B cell (primary cell): ENCODE measurements at regions of chr1 and their contacts with region 1.

Region 1: DNA sequence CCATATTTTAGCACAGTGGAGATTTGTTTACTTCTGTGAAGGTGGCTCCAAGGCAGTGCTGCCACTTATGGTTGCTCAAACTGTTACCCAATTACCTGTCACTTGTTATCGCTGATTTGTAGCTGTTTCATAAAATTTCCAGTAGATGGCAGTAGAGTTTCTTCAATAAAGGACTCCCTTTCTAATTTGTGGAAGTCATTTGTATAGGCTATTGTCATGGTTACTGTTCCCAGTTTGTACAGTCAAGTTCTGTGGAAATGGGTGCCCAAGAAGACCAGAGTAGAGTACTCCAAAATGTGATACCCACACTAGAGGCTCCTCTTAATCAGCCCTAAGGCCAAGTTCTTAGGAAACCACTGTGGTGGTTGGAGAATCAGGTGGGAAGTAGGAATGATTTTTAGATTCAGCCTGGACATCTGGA is 186.1 kb downstream of the CLEC20A start:
- DNase-seq: peak; percentile 70
- ATAC-seq: peak; percentile 45
- H3K4me3 ChIP-seq: no peak overlapping the region
- H3K4me3 Mint-ChIP-seq: no peak overlapping the region
- H3K27ac ChIP-seq: no peak overlapping the region
- H3K27ac Mint-ChIP-seq: no peak overlapping the region
- H3K4me1 ChIP-seq: no peaks in the 10 kb centered on the region
- H3K4me1 Mint-ChIP-seq: no peaks in the 10 kb centered on the region
- H3K27me3 ChIP-seq: peaks cover 0 to 3% (median 0%) of the 10 kb centered on the region in 4 experiments
- H3K27me3 Mint-ChIP-seq: peaks cover 10% of the 10 kb centered on the region
- CTCF ChIP-seq: peak; percentile 82

Region 2: GRCh38 chr1:178501705-178502329 is 191.1 kb after region 1 on chr1:
- CTCF ChIA-PET with region 1: interaction called, 120 read pairs
- POLR2A ChIA-PET with region 1: no interaction called
- intact Hi-C with region 1: loop called (anchors 1 kb)
- DNase-seq: peak; percentile 69
- ATAC-seq: peak; percentile 69
- H3K4me3 ChIP-seq: no peak overlapping the region
- H3K4me3 Mint-ChIP-seq: no peak overlapping the region
- H3K27ac ChIP-seq: no peak overlapping the region
- H3K27ac Mint-ChIP-seq: no peak overlapping the region
- H3K4me1 ChIP-seq: no peaks in the 10 kb centered on the region
- H3K4me1 Mint-ChIP-seq: no peaks in the 10 kb centered on the region
- H3K27me3 ChIP-seq: peaks cover 0 to 7% (median 3%) of the 10 kb centered on the region in 4 experiments
- H3K27me3 Mint-ChIP-seq: peaks cover 8% of the 10 kb centered on the region
- CTCF ChIP-seq: peak; percentile 77

Region 3: DNA sequence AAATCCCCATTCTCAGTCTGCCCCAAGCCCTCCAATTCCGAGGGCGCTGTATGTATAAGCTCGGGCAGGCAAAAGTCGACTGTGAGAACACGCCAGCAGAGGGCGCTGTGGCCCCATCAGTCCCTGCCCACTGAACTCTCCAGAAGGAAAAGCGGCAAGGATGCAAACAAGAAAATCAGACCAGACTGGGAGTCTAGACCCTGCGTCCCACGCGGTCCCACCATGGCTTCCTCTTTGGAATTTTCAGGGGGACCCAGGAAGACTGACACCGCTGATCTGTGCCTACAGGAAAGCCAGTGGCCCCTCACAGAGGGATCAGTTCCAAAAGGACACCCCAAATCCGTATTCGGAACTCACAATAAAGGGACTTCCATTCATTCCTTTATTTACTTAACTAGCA is 221.7 kb after region 1 on chr1:
- CTCF ChIA-PET with region 1: interaction called, 54 read pairs
- POLR2A ChIA-PET with region 1: no interaction called
- intact Hi-C with region 1: loop called (anchors 1 kb)
- DNase-seq: peak; percentile 87
- ATAC-seq: peak; percentile 90
- H3K4me3 ChIP-seq: no peak overlapping the region
- H3K4me3 Mint-ChIP-seq: no peak overlapping the region
- H3K27ac ChIP-seq: no peak overlapping the region
- H3K27ac Mint-ChIP-seq: no peak overlapping the region
- H3K4me1 ChIP-seq: peaks cover 0 to 9% of the 10 kb centered on the region in 2 donors
- H3K4me1 Mint-ChIP-seq: peaks cover 4% of the 10 kb centered on the region
- H3K27me3 ChIP-seq: no peaks in the 10 kb centered on the region
- H3K27me3 Mint-ChIP-seq: no peaks in the 10 kb centered on the region
- CTCF ChIP-seq: peak; percentile 98

Region 4: DNA sequence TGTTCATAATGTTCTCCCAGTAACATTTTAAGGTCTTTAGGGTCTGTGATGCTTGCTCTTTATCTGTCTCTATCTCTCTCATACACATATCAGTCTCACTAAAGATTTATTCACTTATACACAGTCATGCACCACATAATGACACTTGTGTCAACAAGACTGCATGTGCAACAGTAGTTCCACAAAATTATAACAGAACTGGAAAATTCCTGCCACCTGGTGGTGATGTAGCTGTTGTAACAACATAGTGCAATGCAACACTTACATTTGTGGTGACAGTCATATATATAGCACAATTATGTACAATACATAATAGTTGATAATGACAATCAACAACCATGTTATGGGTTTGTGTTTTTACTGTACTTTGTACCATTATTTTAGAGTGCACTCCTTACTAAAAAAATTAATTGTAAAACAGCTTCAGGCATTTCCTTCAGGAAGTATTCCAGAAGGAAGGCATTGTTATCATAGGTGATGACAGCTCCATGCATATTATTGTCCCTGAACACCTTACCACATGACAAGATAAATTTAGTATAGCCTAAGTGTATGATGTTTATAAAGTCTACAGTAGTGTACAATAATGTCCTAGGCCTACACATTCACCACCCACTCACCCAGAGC is 1289.0 kb after region 1 on chr1:
- CTCF ChIA-PET with region 1: interaction called, 5 read pairs
- POLR2A ChIA-PET with region 1: no interaction called
- intact Hi-C with region 1: loop called (anchors 5 kb)
- DNase-seq: peak; percentile 21
- ATAC-seq: no peak
- H3K4me3 ChIP-seq: no peak overlapping the region
- H3K4me3 Mint-ChIP-seq: no peak overlapping the region
- H3K27ac ChIP-seq: no peak overlapping the region
- H3K27ac Mint-ChIP-seq: no peak overlapping the region
- H3K4me1 ChIP-seq: no peaks in the 10 kb centered on the region
- H3K4me1 Mint-ChIP-seq: no peaks in the 10 kb centered on the region
- H3K27me3 ChIP-seq: no peaks in the 10 kb centered on the region
- H3K27me3 Mint-ChIP-seq: peaks cover 27% of the 10 kb centered on the region
- CTCF ChIP-seq: peak; percentile 11